IMR-90 (cell line): ENCODE measurements at regions of chr22 and their contacts with region 1.

Region 1: GRCh38 chr22:40982482-40983385 is 31.6 kb downstream of the RBX1 start:
- DNase-seq: no peak
- ATAC-seq: no peak
- H3K4me3 ChIP-seq: no peak overlapping the region
- H3K27ac ChIP-seq: no peak overlapping the region
- H3K4me1 ChIP-seq: no peaks in the 10 kb centered on the region
- H3K27me3 ChIP-seq: no peaks in the 10 kb centered on the region
- CTCF ChIP-seq: no peak
- POLR2A ChIP-seq: no peak
- RAD21 ChIP-seq: no peak

Region 2: DNA sequence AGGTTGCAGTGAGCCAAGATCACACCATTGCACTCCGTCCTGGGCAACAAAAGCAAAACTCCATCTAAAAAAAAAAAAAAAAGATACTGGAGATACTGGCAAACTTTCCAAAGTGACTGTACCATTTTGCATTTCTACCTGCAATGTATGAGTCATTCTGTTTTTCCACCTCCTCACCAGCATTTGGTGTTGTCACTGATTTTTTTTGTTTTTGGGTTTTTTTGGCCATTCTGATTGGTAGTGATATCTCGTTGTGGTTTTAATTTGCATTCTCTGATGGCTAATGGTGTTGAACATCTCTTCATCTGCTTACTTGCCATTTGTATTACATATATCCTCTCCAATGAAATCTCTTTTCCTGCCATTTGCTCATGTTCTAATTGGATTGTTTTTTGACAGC is 43.5 kb before region 1 on chr22:
- CTCF ChIA-PET with region 1: no interaction called
- POLR2A ChIA-PET with region 1: no interaction called
- dilution Hi-C with region 1: no loop called
- in situ Hi-C with region 1: no loop called
- intact Hi-C with region 1: no loop called
- DNase-seq: no peak
- ATAC-seq: no peak
- H3K4me3 ChIP-seq: no peak overlapping the region
- H3K27ac ChIP-seq: no peak overlapping the region
- H3K4me1 ChIP-seq: no peaks in the 10 kb centered on the region
- H3K27me3 ChIP-seq: no peaks in the 10 kb centered on the region
- CTCF ChIP-seq: no peak
- POLR2A ChIP-seq: no peak
- RAD21 ChIP-seq: no peak

Region 3: GRCh38 chr22:40995836-40996235 is 13.1 kb after region 1 on chr22:
- CTCF ChIA-PET with region 1: no interaction called
- POLR2A ChIA-PET with region 1: interaction called, 11 read pairs
- dilution Hi-C with region 1: no loop called
- in situ Hi-C with region 1: no loop called
- intact Hi-C with region 1: no loop called
- DNase-seq: no peak
- ATAC-seq: no peak
- H3K4me3 ChIP-seq: no peak overlapping the region
- H3K27ac ChIP-seq: no peak overlapping the region
- H3K4me1 ChIP-seq: no peaks in the 10 kb centered on the region
- H3K27me3 ChIP-seq: peaks cover 19% of the 10 kb centered on the region
- CTCF ChIP-seq: no peak
- POLR2A ChIP-seq: no peak
- RAD21 ChIP-seq: no peak